Ascending aorta (tissue), 2 donors: ENCODE measurements at regions of chr17 and their contacts with region 1.

Region 1: DNA sequence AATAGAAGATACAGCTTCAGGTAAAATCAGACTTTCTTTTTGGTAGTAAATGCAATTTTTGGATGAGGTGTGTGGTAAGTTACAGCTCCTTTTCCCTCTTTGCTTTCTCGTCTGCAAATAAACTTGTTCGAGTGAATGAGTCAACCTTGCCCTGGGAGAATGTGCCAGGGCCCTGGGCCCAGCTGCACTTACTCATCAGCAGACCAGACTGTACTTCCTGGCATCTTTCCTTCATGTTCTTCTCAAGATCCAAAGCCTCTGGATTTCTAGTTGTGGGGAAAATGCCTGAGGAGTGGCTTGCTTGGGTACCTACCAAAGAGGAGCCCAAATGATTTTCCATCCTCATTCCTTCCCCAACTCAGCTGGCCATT is 5.4 kb upstream of the G6PC1 start:
- DNase-seq: peak; percentile 46 to 92
- H3K4me3 ChIP-seq: no peak overlapping the region
- H3K27ac ChIP-seq: peak overlapping the region; percentile 47 to 88
- H3K4me1 ChIP-seq: peaks cover 28 to 40% of the 10 kb centered on the region in 2 donors
- H3K27me3 ChIP-seq: no peaks in the 10 kb centered on the region
- CTCF ChIP-seq: no peak

Region 2: DNA sequence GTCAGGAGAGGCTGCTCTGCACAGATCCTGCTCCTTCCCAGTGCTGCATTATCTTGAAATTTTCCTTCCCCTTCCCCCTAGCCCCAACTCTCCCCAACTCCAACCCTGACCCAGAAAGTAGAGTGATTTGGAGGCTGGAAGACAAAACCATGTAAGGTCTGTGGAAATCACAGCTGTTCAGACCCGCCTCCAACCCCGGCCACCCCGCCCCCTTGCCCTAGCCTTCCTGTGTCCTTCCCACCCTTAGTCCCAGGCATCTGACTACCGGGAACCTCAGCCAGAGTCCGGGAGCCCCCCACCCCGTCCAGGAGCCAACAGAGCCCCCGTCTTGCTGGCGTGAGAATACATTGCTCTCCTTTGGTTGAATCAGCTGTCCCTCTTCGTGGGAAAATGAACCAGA is 44.2 kb before region 1 on chr17 and contains the start of gene AOC3:
- intact Hi-C with region 1: loop called (anchors 2 kb)
- DNase-seq: peak in 1 of 2 donors; percentile 80
- H3K4me3 ChIP-seq: peak within 1 kb of the TSS; percentile 51 to 62
- H3K27ac ChIP-seq: peak within 1 kb of the TSS; percentile 83 to 84
- H3K4me1 ChIP-seq: peaks cover 0 to 23% of the 10 kb centered on the region in 2 donors
- H3K27me3 ChIP-seq: no peaks in the 10 kb centered on the region
- CTCF ChIP-seq: no peak
- total RNA-seq, gene AOC3: 128 TPM